IMR-90 (cell line): ENCODE measurements at regions of chr18 and their contacts with region 1.

Region 1: DNA sequence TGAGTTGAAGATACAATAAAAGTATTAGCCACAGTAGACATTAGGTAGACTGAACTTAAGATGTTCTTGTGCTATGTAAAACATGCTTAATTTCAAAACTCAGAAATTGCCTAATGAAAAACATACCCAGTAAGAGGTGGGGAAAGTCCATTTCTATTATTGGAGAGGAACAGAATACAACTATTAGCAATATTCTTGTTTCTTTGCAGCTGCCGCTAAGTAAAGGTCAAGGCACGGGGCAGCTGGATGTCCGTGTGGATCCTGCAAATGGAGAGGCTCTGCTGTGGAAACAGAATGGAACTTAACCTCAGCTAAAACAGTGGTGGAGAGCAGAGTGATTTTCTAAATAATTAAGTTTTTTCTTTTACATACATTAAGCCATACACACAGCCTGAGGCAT is 139.2 kb upstream of the ARHGAP28 start:
- DNase-seq: no peak
- ATAC-seq: no peak
- H3K4me3 ChIP-seq: no peak overlapping the region
- H3K27ac ChIP-seq: no peak overlapping the region
- H3K4me1 ChIP-seq: no peaks in the 10 kb centered on the region; the same call in 1 of the 2 replicates
- H3K27me3 ChIP-seq: no peaks in the 10 kb centered on the region
- CTCF ChIP-seq: no peak
- POLR2A ChIP-seq: no peak
- RAD21 ChIP-seq: no peak

Region 2: GRCh38 chr18:6537475-6537874 is 52.9 kb before region 1 on chr18:
- CTCF ChIA-PET with region 1: no interaction called
- POLR2A ChIA-PET with region 1: no interaction called
- dilution Hi-C with region 1: no loop called
- in situ Hi-C with region 1: no loop called
- intact Hi-C with region 1: loop called (anchors 1 kb)
- DNase-seq: no peak
- ATAC-seq: peak; percentile 48
- H3K4me3 ChIP-seq: no peak overlapping the region
- H3K27ac ChIP-seq: no peak overlapping the region
- H3K4me1 ChIP-seq: no peaks in the 10 kb centered on the region
- H3K27me3 ChIP-seq: no peaks in the 10 kb centered on the region; the same call in 1 of the 2 replicates
- CTCF ChIP-seq: no peak
- POLR2A ChIP-seq: no peak
- RAD21 ChIP-seq: no peak

Region 3: DNA sequence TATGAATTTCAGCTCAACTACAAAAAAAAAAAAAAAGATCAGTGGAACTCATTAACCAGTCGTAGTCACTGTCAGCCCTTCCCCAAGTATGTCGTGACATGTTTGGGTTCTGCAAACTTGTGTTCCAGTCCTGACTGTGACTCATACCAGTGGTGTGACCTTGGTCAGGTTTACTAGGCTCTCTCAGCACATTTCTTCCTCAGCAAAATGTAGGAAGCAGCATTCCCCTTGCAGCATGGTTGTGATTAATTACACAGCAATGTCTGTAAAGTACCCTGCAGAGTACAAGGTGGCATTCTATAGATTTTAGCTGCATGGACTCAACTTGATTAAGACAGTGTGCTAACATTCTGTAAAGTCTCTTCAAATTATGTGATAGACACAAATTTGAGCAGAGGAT is 370.3 kb after region 1 on chr18:
- CTCF ChIA-PET with region 1: no interaction called
- POLR2A ChIA-PET with region 1: no interaction called
- dilution Hi-C with region 1: no loop called
- in situ Hi-C with region 1: no loop called
- intact Hi-C with region 1: no loop called
- DNase-seq: peak; percentile 65
- ATAC-seq: peak; percentile 83
- H3K4me3 ChIP-seq: no peak overlapping the region
- H3K27ac ChIP-seq: no peak overlapping the region
- H3K4me1 ChIP-seq: no peaks in the 10 kb centered on the region
- H3K27me3 ChIP-seq: no peaks in the 10 kb centered on the region
- CTCF ChIP-seq: no peak
- POLR2A ChIP-seq: no peak
- RAD21 ChIP-seq: no peak